Activated T-helper 2 cell treated with anti-CD3 and anti-CD28 coated beads, Interferon-gamma antibody, Interleukin-2, Interleukin-4, amounts not matched to agents 10 μg/mL and 5 μg/mL and 100 μg/mL, durations not matched to agents 14 hours and 24 hours and 36 hours (primary cell): ENCODE measurements at regions of chr11 and their contacts with region 1.

Region 1: DNA sequence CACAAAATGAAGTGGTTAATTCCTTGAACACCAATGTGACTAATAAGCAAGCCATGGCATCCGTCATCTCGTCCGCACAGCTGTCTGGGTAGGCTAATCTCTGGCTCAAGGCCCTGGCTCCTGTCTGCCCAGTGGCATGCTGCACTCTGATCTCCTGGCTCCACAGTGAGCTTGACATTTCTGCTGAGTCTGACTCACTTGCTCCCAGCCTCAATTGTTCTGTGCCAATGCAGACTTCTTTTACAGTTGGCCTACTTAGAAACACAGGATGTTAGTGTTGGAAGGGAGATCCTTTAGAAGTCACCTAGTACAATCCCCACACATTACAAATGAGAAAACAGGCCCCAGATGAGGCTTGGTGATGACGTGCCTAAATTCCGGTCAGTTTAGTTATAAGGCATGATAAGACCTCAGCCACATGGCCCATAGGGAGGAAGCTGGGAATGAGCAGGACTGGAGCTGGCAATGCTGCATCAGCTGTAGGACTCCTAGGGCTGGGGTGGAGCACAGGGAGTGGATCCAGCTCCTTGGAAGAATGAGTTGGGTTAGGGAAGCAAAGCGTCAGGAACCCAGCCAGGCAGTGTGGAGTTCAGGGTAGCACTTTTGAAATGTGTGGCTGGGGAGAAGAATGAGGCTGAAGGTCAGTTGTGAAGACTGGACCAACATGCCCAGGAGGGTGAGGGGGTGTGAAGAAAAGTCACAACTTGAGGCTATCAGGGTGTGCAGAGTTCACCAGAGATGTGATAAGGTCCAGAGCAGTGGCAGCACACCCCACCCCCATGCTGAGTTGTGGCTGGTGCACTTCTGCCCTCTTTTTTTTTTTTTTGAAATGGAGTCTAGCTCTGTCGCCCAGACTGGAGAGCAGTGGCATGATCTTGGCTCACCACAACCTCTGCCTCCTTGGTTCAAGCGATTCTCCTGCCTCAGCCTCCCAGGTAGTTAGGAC is 70.2 kb upstream of the EED start:
- DNase-seq: no peak
- H3K4me3 Mint-ChIP-seq: no peak overlapping the region
- H3K27ac Mint-ChIP-seq: no peak overlapping the region
- H3K4me1 Mint-ChIP-seq: peaks cover 15% of the 10 kb centered on the region
- H3K27me3 Mint-ChIP-seq: no peaks in the 10 kb centered on the region

Region 2: GRCh38 chr11:85752890-85753581 is 421.3 kb before region 1 on chr11:
- intact Hi-C with region 1: loop called (anchors 1 kb)
- DNase-seq: peak; percentile 91
- H3K4me3 Mint-ChIP-seq: peak overlapping the region; percentile 57
- H3K27ac Mint-ChIP-seq: peak overlapping the region; percentile 95
- H3K4me1 Mint-ChIP-seq: peaks cover 89% of the 10 kb centered on the region
- H3K27me3 Mint-ChIP-seq: no peaks in the 10 kb centered on the region

Region 3: DNA sequence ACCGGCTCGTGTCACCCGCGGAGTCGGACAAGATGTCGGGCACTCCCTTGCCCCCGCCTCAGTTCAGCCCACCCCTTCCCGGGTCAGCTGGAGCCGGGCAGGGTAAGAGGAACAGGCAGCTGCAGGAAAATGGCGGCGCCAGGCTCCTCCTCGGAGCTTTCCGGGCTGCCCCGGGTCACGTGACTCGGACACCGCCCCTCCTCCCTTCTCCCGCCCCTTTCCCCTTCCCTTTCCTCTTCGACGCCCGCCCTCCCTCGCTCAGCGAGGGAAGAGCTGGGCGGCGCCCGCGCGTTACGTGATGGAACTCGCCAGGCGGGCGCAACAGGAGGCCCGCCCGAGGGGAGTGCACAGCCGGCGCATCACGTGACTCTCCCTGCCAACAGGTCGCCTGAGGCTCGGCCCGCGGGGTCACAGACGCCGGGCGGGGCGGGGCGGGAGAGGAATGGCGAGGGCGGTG is 105.4 kb before region 1 on chr11 and contains the start of gene PICALM:
- intact Hi-C with region 1: loop called (anchors 1 kb)
- DNase-seq: peak; percentile 97
- H3K4me3 Mint-ChIP-seq: peak within 1 kb of the TSS; percentile 95
- H3K27ac Mint-ChIP-seq: peak within 1 kb of the TSS; percentile 88
- H3K4me1 Mint-ChIP-seq: peaks cover 30% of the 10 kb centered on the region
- H3K27me3 Mint-ChIP-seq: peaks cover 2% of the 10 kb centered on the region
- total RNA-seq, gene PICALM: 193 and 213 TPM in 2 replicates

Region 4: GRCh38 chr11:86091566-86091965 is 82.8 kb before region 1 on chr11:
- intact Hi-C with region 1: no loop called
- DNase-seq: no peak
- H3K4me3 Mint-ChIP-seq: no peak overlapping the region
- H3K27ac Mint-ChIP-seq: no peak overlapping the region
- H3K4me1 Mint-ChIP-seq: peaks cover 5% of the 10 kb centered on the region
- H3K27me3 Mint-ChIP-seq: no peaks in the 10 kb centered on the region

Region 5: DNA sequence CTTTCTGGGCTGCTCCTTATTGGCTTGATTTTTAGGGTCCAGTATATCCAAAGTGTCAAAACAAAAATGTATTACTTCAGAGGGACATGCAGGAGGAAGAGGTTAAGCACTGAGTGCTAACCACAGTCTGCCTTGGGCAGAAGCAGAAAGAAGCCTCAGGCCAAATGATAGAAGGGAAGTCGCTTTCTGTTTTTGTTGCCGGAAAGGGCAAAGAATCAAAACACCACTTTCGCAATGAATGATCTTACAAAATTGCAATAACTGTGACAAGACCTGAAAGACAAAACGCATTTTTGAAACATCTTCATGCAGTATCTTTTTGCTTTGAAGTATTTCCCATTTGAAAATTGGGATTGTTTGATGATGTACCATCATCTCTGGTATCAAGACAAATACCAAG is 35.4 kb before region 1 on chr11:
- intact Hi-C with region 1: loop called (anchors 1 kb)
- DNase-seq: peak; percentile 33
- H3K4me3 Mint-ChIP-seq: peak overlapping the region; percentile 35
- H3K27ac Mint-ChIP-seq: peak overlapping the region; percentile 76
- H3K4me1 Mint-ChIP-seq: peaks cover 63% of the 10 kb centered on the region
- H3K27me3 Mint-ChIP-seq: no peaks in the 10 kb centered on the region

Region 6: DNA sequence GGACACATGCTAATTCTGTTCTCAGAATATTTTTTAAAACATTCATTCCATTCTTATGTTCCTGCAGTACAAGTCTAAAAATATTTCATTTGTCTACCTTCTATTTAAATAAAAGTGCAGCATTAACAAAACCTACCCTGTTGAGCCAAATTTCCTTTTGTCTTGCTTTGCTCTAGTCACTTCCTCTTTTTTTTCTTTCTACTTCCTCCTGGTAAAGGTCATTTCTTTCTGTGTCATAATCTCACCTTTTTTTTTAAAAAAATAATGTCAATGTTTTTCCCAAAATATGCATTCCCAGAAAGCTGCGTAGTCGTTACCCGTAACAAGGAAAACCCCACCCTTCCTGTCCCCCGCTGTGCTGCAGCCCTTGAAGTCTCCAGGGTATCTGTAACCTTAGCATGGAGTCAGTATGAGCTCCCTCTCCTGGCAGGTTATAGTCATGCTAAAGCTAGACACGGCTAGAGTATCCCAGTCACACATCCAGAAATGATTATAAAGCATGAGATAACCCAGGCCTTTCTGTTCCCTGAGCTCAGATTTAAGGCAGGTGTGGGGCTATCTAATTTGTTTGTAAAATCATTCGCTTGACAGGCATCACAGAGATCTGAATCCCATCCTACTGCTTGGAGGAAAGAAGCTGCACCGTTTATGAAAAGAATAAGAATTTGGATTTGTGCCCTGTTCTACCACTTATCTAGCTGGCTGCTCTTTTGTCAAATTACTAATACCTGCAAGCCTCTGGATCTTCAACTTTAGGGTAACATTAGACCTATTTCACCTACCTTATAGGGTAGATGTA is 19.1 kb after region 1 on chr11:
- intact Hi-C with region 1: loop called (anchors 1 kb)
- DNase-seq: peak; percentile 53
- H3K4me3 Mint-ChIP-seq: peak overlapping the region; percentile 62
- H3K27ac Mint-ChIP-seq: peak overlapping the region; percentile 71
- H3K4me1 Mint-ChIP-seq: peaks cover 36% of the 10 kb centered on the region
- H3K27me3 Mint-ChIP-seq: no peaks in the 10 kb centered on the region

Region 7: GRCh38 chr11:86218125-86219084 is 44.0 kb after region 1 on chr11:
- intact Hi-C with region 1: loop called (anchors 1 kb)
- DNase-seq: peak; percentile 49
- H3K4me3 Mint-ChIP-seq: peak overlapping the region; percentile 13
- H3K27ac Mint-ChIP-seq: peak overlapping the region; percentile 70
- H3K4me1 Mint-ChIP-seq: peaks cover 67% of the 10 kb centered on the region
- H3K27me3 Mint-ChIP-seq: no peaks in the 10 kb centered on the region

Region 8: DNA sequence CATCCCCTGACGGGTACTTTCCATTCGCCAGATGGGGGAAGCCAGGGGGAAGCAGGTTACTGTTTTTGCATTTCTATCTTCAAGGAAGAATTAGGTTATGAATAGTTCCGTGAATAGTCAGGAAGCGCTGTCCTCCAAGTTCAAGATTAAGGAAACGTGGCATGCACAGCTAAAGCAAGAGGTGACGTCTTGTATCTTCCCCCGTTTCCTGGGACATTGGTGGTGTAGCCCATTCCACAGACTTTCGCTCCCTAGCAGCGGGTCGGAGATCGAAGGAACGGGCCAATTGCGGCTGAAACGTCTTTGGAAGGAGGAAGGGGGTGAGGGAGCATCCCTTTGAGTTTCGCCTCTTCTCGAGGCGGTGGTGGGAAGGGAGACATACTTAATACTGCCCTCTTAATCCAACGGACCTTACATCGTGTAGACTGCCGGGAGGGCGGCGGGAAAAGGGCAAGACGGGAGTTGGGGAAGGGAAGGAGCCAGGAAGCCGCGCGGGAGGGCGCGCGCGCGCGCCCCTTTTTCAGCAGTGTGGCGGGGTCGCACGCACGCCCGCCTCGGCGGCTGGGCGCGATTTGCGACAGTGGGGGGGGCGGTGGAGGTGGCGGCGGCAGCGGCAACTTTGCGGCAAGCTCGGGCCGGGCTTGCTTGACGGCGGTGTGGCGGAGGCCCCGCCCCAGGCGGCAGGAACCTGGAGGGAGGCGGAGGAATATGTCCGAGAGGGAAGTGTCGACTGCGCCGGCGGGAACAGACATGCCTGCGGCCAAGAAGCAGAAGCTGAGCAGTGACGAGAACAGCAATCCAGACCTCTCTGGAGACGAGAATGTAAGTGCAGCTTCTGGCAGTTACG is 70.4 kb after region 1 on chr11 and contains the start of gene EED:
- intact Hi-C with region 1: loop called (anchors 2 kb)
- DNase-seq: peak; percentile 92
- H3K4me3 Mint-ChIP-seq: no peak within 1 kb of the TSS
- H3K27ac Mint-ChIP-seq: no peak within 1 kb of the TSS
- H3K4me1 Mint-ChIP-seq: peaks cover 38% of the 10 kb centered on the region
- H3K27me3 Mint-ChIP-seq: no peaks in the 10 kb centered on the region
- total RNA-seq, gene EED: 174 and 182 TPM in 2 replicates